H1 (cell line): ENCODE measurements at regions of chr11 and their contacts with region 1.

Region 1: GRCh38 chr11:64284048-64284961 is at the start of gene BAD:
- DNase-seq: peak in 1 of 2 experiments; percentile 96
- H3K4me3 ChIP-seq: peak within 1 kb of the TSS; percentile 49 to 70 (median 69)
- H3K27ac ChIP-seq: peak within 1 kb of the TSS; percentile 68; the same call in 1 of the 2 replicates
- H3K4me1 ChIP-seq: peaks cover 0 to 8% (median 4%) of the 10 kb centered on the region in 4 experiments; a peak in 4 of 7 replicates
- H3K27me3 ChIP-seq: peaks cover 0 to 7% (median 3%) of the 10 kb centered on the region in 4 experiments; a peak in 3 of 7 replicates
- CTCF ChIP-seq: no peak
- EP300 ChIP-seq: no peak
- POLR2A ChIP-seq: peak in 1 of 2 experiments; percentile 25; a peak in 1 of 3 replicates
- RAD21 ChIP-seq: no peak
- total RNA-seq, gene BAD: 23.1 and 25.3 TPM in 2 replicates

Region 2: DNA sequence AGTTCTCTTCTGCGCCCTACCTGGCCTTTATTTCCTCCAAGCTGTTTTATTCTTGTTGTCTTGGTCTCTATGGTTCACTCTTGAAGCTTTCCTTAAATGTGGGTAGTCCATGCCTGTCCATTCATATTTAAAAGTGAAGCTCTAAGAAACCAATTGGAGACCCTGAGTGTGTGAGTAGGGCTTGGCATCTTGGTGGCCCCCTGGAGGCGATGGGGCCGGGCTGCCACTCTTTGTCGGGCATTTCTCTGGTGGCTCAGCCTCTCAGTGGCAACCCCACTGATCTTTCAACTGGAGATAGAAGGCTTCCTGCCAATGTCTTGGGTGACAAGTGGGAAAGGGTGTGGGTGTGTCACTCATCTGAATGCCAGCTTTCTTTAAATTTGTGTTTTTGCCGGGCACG is 67.4 kb before region 1 on chr11:
- CTCF ChIA-PET with region 1: no interaction called
- POLR2A ChIA-PET with region 1: no interaction called
- DNase-seq: no peak
- H3K4me3 ChIP-seq: no peak overlapping the region
- H3K27ac ChIP-seq: no peak overlapping the region
- H3K4me1 ChIP-seq: no peaks in the 10 kb centered on the region
- H3K27me3 ChIP-seq: no peaks in the 10 kb centered on the region
- CTCF ChIP-seq: peak in 2 of 3 experiments; percentile 8 to 10; a peak in 2 of 4 replicates
- EP300 ChIP-seq: no peak
- POLR2A ChIP-seq: no peak
- RAD21 ChIP-seq: no peak

Region 3: GRCh38 chr11:64297699-64298358 is 13.5 kb after region 1 on chr11:
- CTCF ChIA-PET with region 1: interaction called, 168 read pairs
- POLR2A ChIA-PET with region 1: interaction called, 20 read pairs
- DNase-seq: peak in 1 of 2 experiments; percentile 56
- H3K4me3 ChIP-seq: peak overlapping the region in 2 of 4 experiments; percentile 6 to 47; a peak in 2 of 8 replicates
- H3K27ac ChIP-seq: no peak overlapping the region
- H3K4me1 ChIP-seq: peaks cover 0 to 23% (median 14%) of the 10 kb centered on the region in 4 experiments; a peak in 5 of 7 replicates
- H3K27me3 ChIP-seq: peaks cover 70 to 91% (median 83%) of the 10 kb centered on the region in 4 experiments
- CTCF ChIP-seq: no peak
- EP300 ChIP-seq: no peak
- POLR2A ChIP-seq: no peak
- RAD21 ChIP-seq: no peak